Activated naive CD4-positive, alpha-beta T cell treated with anti-CD3 and anti-CD28 coated beads for 36 hours (primary cell): ENCODE measurements at regions of chr2 and their contacts with region 1.

Region 1: DNA sequence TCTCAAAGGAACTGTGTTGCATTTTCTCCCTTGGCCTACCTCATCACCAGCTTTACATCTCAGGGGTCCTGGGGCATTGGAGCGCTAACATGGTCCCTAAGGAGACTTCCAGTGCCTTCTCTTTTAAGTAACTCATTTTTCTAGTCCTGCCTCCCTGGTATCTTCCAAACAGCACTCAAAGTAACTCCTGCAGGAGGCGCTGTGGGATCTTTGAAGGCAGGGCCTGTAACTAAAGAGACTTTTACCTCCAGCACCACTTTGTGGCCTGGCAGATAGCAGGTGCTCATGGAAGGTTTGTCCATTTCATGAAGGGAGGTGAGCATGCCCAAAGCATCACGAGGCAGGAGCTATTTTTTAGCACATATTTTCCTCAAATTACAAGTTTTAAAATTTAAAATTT is 411.0 kb upstream of the GYPC start:
- DNase-seq: peak; percentile 81
- H3K4me3 Mint-ChIP-seq: no peak overlapping the region
- H3K27ac Mint-ChIP-seq: no peak overlapping the region
- H3K4me1 Mint-ChIP-seq: no peaks in the 10 kb centered on the region
- H3K27me3 Mint-ChIP-seq: peaks cover 8% of the 10 kb centered on the region

Region 2: DNA sequence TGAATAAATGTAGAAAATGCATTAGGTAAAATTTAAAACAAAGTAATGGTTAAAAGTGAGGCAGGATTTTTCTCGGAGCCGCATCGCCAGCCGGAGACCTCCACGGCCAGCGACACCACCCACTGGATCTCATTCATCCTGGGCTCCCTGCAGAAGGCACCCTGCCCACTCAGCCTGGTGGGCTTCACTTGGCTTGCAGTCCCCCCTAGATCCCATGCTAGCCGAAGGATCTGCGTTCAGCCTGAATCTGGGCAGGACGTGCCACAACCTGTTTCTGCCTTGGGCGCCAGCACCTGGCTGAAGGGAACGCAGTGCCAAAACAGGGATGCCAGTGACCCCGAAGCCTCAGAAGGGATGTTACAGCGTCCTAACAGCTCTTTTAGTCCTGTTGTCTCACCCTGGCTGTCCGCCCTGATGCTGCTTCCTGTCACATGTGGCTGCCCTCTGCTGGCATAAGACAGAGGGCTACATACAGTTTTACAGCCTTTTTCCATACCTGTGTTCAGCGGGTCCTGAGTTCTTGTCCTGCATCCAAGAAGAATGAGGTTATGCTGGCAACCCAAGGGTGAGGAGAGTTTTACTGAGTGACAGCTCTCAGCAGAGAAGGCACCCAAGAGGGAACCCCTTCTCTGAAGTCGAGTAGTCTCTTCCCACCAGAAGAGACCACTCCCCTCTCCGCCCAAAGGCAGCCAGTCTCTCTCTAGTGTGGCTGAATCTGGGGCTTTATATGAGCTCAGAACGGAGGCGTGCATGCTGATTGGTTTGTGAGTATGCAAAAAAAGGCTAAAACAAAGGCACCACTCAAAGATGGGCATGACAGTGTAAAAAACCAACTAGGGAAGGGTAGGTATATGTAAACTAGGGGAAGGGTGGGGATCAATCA is 237.9 kb after region 1 on chr2:
- CTCF ChIA-PET with region 1: no interaction called
- intact Hi-C with region 1: loop called (anchors 5 kb)
- DNase-seq: peak; percentile 28
- H3K4me3 Mint-ChIP-seq: no peak overlapping the region
- H3K27ac Mint-ChIP-seq: no peak overlapping the region
- H3K4me1 Mint-ChIP-seq: no peaks in the 10 kb centered on the region
- H3K27me3 Mint-ChIP-seq: peaks cover 5% of the 10 kb centered on the region

Region 3: DNA sequence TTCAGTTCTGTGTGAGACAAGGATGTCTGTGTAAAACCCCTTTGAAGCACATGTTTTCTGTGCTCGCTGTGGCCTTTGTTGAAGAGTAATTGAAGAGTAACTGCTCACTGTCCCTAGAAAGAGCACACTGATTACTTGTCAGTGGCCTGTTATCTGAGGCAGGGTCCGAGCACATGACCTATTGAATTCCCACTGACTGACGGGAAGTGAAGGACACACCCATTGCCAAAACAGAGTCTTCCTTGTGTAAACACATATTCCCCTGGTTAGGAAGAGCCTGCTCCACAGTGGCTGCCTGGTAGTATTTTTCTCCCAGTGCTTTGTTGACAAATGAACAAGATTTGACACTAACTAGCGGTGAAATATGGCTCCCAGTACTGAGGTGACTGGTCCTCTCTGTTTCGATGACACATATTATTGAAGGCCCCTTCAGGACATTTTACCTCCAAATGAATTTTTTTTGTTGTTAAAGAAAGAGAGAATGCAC is 262.5 kb after region 1 on chr2:
- CTCF ChIA-PET with region 1: no interaction called
- intact Hi-C with region 1: no loop called
- DNase-seq: no peak
- H3K4me3 Mint-ChIP-seq: no peak overlapping the region
- H3K27ac Mint-ChIP-seq: no peak overlapping the region
- H3K4me1 Mint-ChIP-seq: no peaks in the 10 kb centered on the region
- H3K27me3 Mint-ChIP-seq: peaks cover 3% of the 10 kb centered on the region

Region 4: GRCh38 chr2:126634273-126634861 is 389.4 kb after region 1 on chr2:
- CTCF ChIA-PET with region 1: interaction called, 3 read pairs
- intact Hi-C with region 1: loop called (anchors 2 kb)
- DNase-seq: peak; percentile 45
- H3K4me3 Mint-ChIP-seq: no peak overlapping the region
- H3K27ac Mint-ChIP-seq: no peak overlapping the region
- H3K4me1 Mint-ChIP-seq: no peaks in the 10 kb centered on the region
- H3K27me3 Mint-ChIP-seq: no peaks in the 10 kb centered on the region

Region 5: GRCh38 chr2:126886211-126886915 is 641.4 kb after region 1 on chr2:
- CTCF ChIA-PET with region 1: no interaction called
- intact Hi-C with region 1: loop called (anchors 2 kb)
- DNase-seq: peak; percentile 70
- H3K4me3 Mint-ChIP-seq: no peak overlapping the region
- H3K27ac Mint-ChIP-seq: no peak overlapping the region
- H3K4me1 Mint-ChIP-seq: peaks cover 2% of the 10 kb centered on the region
- H3K27me3 Mint-ChIP-seq: peaks cover 13% of the 10 kb centered on the region